ENCODE measurements at regions of chr10 and their contacts with region 1.

Region 1: DNA sequence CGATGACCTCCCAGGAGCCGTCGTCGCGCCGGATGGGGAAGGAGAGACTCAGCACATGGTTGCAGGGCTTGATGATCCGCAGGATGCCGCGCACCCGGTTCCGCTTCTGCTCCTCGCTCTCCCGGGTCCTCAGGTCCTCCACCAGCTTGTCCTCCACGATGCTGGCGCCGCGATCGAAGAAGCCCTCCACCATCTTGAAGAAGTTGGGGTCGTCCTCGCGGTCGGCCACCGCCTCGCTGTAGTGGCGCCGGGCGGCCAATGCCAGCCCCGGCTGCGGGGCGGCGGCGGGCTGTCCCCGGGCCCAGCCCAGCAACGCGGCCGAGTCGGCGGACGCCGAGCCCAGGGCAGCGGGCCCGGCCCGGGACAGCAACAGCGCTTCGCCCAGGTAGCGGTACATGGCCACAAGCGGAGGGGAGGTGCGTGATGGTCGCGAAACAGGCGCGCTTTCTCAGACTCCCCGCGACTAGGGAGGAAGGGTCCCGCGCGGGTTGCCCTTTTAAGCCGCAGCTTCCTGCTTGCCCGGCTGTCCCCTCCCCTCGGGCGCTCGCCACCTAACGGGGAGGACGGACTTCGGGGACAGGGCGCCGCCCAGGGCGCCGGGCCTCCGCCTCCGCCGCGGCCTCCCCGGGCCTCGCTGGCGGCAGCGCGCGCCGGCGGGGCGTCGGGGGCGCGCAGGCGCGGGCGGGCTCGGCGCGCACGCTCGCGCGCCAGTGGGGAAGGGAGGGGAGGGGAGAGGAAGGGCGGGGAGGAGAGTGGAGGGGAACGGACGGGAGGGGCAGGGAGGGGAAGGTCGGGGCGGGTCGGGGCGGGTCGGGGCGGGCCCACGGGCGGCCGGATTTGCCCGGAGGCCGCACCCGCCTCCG is at the starts of genes GLUD1 and SHLD2:
- DNase-seq: peak; percentile 93 to 96
- H3K4me3 ChIP-seq: peak within 1 kb of the TSS; percentile 85 to 94
- H3K27ac ChIP-seq: peak within 1 kb of the TSS; percentile 96 to 99
- H3K4me1 ChIP-seq: peaks cover 0 to 37% (median 11%) of the 10 kb centered on the region in 4 donors
- H3K27me3 ChIP-seq: no peaks in the 10 kb centered on the region
- CTCF ChIP-seq: no peak

Region 2: GRCh38 chr10:86693721-86694369 is 400.8 kb before region 1 on chr10:
- intact Hi-C with region 1: loop called (anchors 10 kb)
- DNase-seq: peak in 1 of 2 donors; percentile 52
- H3K4me3 ChIP-seq: no peak overlapping the region
- H3K27ac ChIP-seq: peak overlapping the region; percentile 47 to 89
- H3K4me1 ChIP-seq: peaks cover 0 to 54% (median 28%) of the 10 kb centered on the region in 4 donors
- H3K27me3 ChIP-seq: no peaks in the 10 kb centered on the region
- CTCF ChIP-seq: peak; percentile 58 to 60

Region 3: GRCh38 chr10:86960003-86960862 is 134.4 kb before region 1 on chr10:
- intact Hi-C with region 1: loop called (anchors 10 kb)
- DNase-seq: peak; percentile 50 to 84
- H3K4me3 ChIP-seq: peak overlapping the region; percentile 49 to 50
- H3K27ac ChIP-seq: peak overlapping the region; percentile 91 to 94
- H3K4me1 ChIP-seq: peaks cover 5 to 78% (median 74%) of the 10 kb centered on the region in 4 donors
- H3K27me3 ChIP-seq: no peaks in the 10 kb centered on the region
- CTCF ChIP-seq: peak; percentile 99